HAP-1 (cell line): ENCODE measurements at regions of chrX and their contacts with region 1.

Region 1: GRCh38 chrX:101863902-101864301 is 67.9 kb downstream of the ZMAT1 start:
- DNase-seq: no peak
- H3K4me3 ChIP-seq: no peak overlapping the region
- H3K4me1 ChIP-seq: no peaks in the 10 kb centered on the region
- H3K27me3 ChIP-seq: no peaks in the 10 kb centered on the region

Region 2: DNA sequence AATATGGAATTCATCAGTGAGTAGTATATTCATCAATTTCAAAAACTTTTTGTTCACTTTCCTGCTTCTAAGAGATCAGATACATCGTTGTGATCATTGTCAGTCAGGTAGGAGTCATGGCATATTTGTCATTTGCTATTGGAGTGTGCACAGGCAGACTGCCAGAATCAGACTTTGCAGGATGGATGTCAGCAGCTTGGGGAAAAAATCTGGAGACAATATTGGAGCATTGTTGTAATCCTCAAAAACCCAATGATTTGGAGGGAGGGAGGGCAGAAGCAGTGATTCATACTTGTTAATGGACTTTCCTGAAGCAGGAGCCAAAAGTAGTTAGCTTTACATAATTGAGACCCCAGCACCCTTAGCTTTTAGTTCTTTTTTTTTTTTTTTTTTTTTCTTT is 703.9 kb before region 1 on chrX:
- in situ Hi-C with region 1: no loop called
- DNase-seq: no peak
- H3K4me3 ChIP-seq: no peak overlapping the region
- H3K4me1 ChIP-seq: no peaks in the 10 kb centered on the region
- H3K27me3 ChIP-seq: no peaks in the 10 kb centered on the region

Region 3: DNA sequence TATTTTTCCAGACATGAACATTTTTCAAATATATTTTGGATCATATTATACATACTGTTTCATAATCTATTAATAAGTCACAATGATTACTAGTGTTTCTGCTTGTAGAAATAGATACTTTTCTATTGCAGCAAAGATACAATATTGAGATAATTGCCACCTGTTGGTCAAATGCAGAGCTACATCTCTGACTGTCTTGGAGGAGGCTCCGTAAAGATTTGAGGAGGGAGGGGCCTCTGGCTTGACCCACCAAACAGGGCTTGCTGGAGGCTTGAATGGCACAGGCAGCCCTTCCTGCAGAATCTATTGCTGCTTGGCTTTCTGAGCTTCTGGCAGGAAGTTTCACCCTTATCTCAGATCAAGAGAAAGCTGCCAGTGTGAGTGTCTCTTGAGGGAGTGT is 104.9 kb before region 1 on chrX:
- in situ Hi-C with region 1: loop called (anchors 25 kb)
- DNase-seq: peak; percentile 25 to 49
- H3K4me3 ChIP-seq: no peak overlapping the region
- H3K4me1 ChIP-seq: no peaks in the 10 kb centered on the region
- H3K27me3 ChIP-seq: peaks cover 3% of the 10 kb centered on the region; the same call in 1 of the 2 replicates